Posterior vena cava (tissue), 2 donors: ENCODE measurements at regions of chr19 and their contacts with region 1.

Region 1: DNA sequence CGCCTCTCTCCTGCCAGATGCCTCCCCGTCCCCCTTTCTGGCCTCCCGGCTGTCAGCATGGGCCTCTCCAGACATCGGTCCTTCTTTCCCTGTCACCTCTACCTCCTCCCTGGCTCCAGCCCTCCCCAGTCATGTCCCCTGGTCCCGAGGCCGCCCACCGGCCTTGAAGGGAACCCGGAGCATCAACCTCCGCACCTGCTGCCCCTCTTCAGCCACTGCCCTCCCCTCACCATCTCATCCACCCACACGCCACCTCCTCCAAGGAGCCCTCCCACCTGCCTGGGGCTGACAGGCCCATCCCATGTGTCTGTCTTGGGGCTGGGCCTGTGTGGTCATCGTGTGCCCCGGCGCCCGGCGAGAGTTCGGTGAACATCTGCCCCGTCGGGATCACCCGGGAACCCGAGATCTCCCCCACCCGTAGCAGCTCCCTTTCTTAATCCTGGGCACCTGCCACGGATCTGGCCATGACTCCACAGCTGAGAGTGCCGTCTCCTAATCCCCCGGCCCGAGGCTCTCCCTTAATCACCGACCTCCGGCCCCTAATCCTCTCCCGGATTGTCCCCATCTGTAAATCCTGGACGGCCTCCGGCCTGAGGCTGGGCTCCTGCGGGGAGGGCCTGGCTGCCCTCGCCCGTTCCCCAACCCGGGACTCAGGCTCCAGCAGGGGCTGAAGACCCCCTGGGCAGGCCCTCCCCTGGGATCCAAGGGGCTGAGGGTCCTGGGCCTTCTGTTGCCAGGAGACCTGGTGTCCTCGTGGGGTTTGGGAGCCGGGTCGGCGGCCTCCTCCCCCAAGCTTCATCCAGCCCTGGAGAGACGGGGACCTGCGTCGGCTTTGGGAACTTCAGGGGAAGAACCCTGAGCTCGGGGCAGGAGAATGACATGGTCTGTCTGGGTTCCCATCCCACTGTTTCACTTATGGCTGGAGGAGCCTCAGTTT is 5.9 kb downstream of the HCN2 start:
- DNase-seq: no peak

Region 2: DNA sequence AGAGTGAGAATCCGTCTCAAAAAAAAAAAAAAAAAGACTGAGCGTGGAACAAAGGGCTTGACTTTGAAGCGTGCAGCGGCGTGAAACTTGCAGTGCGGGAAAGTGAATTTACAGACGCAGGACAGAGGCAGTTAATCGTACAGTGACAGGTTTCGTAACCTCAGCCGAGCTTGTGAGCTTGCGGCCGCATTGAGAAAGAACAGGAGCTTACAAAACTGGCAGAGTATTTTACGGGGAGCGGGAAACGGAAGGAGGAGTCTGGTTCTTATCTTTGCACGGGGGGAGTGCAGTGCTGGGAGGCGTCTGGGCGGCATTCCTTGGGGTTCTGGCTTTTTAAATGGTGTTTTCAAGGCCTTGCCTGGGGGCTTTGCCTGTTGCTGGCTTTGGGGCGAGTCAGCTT is 29.2 kb before region 1 on chr19:
- intact Hi-C with region 1: loop called in 1 of 2 experiments (anchors 1 kb)
- DNase-seq: peak; percentile 52